ENCODE measurements at regions of chr2 and their contacts with region 1.

Region 1: GRCh38 chr2:126776692-126777619 is 121.0 kb downstream of the GYPC start:
- DNase-seq: peak; percentile 88
- CTCF ChIP-seq: peak; percentile 99

Region 2: GRCh38 chr2:126253669-126254068 is 523.3 kb before region 1 on chr2:
- in situ Hi-C with region 1: loop called (anchors 25 kb)
- DNase-seq: no peak
- CTCF ChIP-seq: no peak

Region 3: GRCh38 chr2:126527836-126528507 is 249.0 kb before region 1 on chr2:
- in situ Hi-C with region 1: loop called (anchors 10 kb)
- DNase-seq: peak; percentile 55
- CTCF ChIP-seq: peak; percentile 72

Region 4: GRCh38 chr2:126945118-126945517 is 168.2 kb after region 1 on chr2:
- in situ Hi-C with region 1: no loop called
- DNase-seq: no peak
- CTCF ChIP-seq: no peak

Measured in GM13977 (cell line).